Activated CD4-positive, alpha-beta T cell treated with anti-CD3 and anti-CD28 coated beads, Interleukin-2, amount 10 ng/mL, durations not matched to agents 24 days and 14 days (primary cell): ENCODE measurements at regions of chr4 and their contacts with region 1.

Region 1: DNA sequence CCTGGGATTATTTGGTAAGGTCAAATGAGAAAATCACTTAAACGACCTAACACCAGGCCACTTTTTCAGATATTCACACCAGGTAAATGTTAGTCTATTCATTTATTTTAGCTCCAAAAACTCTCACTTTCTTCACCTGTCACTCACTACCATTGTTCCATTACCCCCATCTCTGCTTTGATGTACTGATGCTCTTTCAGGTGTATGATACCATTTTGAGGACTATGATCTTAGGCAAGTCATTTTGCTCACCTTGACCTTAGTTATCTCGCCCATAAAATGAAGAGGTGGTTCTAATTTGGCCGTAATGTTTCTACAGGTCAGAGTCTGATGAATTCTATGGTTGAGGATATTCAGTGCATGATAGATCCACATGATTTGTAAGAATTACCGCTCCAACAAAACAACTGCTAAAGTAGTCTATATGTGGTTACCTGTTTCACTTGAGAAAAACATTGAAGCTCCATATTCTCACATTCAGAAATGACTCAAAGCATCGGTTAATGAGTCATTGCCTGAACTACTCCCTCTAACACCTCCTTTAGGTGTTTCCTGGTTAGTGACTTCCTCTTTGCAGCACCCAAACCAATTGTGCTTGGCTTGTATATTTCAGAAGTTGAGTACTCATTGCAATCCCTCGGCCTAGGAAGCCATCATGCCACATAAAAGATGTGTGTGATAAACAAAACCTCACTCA is 4.5 kb downstream of the DTHD1 start:
- DNase-seq: peak; percentile 92
- H3K4me3 Mint-ChIP-seq: peak overlapping the region; percentile 75
- H3K27ac Mint-ChIP-seq: peak overlapping the region; percentile 96
- H3K4me1 Mint-ChIP-seq: peaks cover 65% of the 10 kb centered on the region
- H3K27me3 Mint-ChIP-seq: peaks cover 3% of the 10 kb centered on the region

Region 2: GRCh38 chr4:36054750-36055467 is 231.0 kb before region 1 on chr4:
- intact Hi-C with region 1: no loop called
- DNase-seq: no peak
- H3K4me3 Mint-ChIP-seq: no peak overlapping the region
- H3K27ac Mint-ChIP-seq: no peak overlapping the region
- H3K4me1 Mint-ChIP-seq: no peaks in the 10 kb centered on the region
- H3K27me3 Mint-ChIP-seq: no peaks in the 10 kb centered on the region

Region 3: DNA sequence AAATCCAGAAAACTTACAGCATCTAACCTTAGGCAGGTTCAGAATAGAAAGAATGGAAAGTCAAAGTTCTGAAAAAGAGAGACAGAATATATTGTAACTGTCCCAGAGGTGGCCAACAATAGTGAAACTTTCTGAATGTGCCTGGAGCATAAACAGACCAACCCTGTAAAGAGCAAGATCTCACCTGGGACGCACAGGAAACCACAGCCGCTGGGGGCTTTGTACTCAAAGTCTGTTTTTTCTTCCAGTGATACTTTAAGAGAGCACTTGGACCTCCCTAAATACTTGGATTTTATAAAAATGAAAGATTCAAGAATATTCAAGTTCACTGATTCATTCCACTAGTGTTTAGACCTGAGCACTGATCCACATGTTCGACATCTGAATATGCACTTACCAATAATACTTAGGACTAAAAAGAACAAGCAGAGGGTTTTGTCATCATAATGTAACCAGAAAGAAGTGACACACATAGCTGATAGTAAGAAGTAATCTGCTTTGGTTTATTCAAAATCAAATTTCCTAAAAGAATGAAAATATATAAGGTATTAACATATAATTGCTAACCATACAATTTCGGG is 76.9 kb before region 1 on chr4:
- intact Hi-C with region 1: loop called (anchors 1 kb)
- DNase-seq: peak; percentile 72
- H3K4me3 Mint-ChIP-seq: peak overlapping the region; percentile 57
- H3K27ac Mint-ChIP-seq: peak overlapping the region; percentile 78
- H3K4me1 Mint-ChIP-seq: peaks cover 39% of the 10 kb centered on the region
- H3K27me3 Mint-ChIP-seq: no peaks in the 10 kb centered on the region

Region 4: GRCh38 chr4:36255577-36255976 is 30.4 kb before region 1 on chr4:
- intact Hi-C with region 1: loop called (anchors 1 kb)
- DNase-seq: peak; percentile 91
- H3K4me3 Mint-ChIP-seq: peak overlapping the region; percentile 70
- H3K27ac Mint-ChIP-seq: peak overlapping the region; percentile 91
- H3K4me1 Mint-ChIP-seq: peaks cover 28% of the 10 kb centered on the region
- H3K27me3 Mint-ChIP-seq: no peaks in the 10 kb centered on the region

Region 5: DNA sequence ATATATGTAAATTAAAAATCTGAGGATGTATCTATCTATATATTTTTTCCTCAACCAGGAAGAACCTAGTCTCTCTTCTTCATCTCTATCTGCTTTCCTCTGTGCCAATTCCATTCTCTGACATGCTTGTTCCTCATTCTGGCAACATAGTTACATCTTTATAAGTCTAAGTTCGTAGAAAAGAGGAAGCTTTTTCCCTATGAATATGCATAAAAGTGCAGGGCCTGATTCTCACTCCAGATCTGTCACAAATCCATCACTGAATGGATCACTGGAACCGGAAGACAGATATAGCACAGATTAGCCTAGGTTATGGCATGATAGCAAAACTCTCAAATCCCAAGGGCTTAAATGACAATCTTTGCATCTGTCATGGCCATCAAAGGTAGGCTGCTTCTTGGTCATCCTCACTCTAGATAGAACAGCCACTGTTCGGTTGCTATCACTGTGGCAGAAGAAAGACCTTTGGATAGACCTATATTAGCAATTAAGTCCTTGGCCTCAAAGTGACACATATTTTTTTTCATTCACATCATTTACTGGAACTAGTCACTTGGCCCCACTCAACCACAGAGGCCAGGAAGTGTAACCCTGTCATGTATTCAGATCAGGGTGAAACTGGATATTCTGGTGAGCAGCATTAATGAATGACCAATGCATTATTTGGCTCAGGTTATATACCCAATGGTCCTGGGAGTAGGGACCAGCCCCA is 17.6 kb after region 1 on chr4:
- intact Hi-C with region 1: loop called (anchors 2 kb)
- DNase-seq: no peak
- H3K4me3 Mint-ChIP-seq: no peak overlapping the region
- H3K27ac Mint-ChIP-seq: peak overlapping the region; percentile 29
- H3K4me1 Mint-ChIP-seq: peaks cover 14% of the 10 kb centered on the region
- H3K27me3 Mint-ChIP-seq: no peaks in the 10 kb centered on the region

Region 6: DNA sequence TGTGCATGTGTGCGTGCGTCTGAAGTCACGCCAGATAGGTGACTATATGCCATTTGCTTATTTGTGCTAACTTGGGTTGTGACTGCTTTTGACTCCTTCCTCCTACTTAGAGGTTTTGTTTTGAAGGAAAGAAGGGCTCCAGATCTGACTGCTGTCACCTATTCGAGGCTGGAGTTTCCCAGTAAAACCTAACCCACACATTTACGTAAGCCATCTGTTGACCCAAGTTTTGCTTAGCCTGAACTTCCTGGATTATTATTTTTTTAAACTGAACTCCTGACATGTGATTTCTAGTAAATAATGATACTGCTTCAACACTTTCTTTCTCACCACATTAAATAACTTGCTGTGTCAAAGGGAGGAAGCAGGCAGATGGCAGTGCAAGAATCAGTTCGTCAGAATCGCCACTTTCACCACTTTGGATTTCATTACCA is 37.0 kb after region 1 on chr4:
- intact Hi-C with region 1: loop called (anchors 1 kb)
- DNase-seq: peak; percentile 90
- H3K4me3 Mint-ChIP-seq: peak overlapping the region; percentile 21
- H3K27ac Mint-ChIP-seq: peak overlapping the region; percentile 93
- H3K4me1 Mint-ChIP-seq: peaks cover 71% of the 10 kb centered on the region
- H3K27me3 Mint-ChIP-seq: no peaks in the 10 kb centered on the region

Region 7: DNA sequence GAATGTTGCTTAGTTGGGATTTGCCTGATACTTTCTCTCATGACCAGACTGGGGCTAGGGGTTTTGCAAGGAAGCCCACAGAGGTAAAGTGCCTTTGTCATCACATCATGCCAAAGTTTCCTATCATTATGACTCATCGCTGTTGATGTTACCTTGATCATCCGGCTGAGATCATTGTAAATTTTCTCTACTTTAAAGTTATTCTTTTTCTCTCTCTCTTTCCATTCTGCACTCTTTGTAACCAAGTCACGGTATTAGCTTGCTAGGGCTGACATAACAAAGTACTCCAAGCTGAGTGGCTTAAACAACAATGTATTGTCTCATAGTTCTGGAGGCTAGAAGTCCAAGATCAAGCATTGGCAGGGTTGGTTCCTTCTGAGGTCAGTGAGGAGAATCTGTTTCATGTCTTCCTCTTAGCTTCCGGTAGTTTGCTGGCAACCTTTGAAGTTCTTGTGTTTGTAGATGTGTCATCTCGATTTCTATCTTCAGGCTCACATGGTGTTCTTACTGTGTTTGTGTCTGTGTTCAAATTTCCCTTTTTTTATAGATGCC is 108.5 kb after region 1 on chr4:
- intact Hi-C with region 1: loop called (anchors 1 kb)
- DNase-seq: peak; percentile 88
- H3K4me3 Mint-ChIP-seq: peak overlapping the region; percentile 70
- H3K27ac Mint-ChIP-seq: peak overlapping the region; percentile 97
- H3K4me1 Mint-ChIP-seq: peaks cover 23% of the 10 kb centered on the region
- H3K27me3 Mint-ChIP-seq: no peaks in the 10 kb centered on the region

Region 8: DNA sequence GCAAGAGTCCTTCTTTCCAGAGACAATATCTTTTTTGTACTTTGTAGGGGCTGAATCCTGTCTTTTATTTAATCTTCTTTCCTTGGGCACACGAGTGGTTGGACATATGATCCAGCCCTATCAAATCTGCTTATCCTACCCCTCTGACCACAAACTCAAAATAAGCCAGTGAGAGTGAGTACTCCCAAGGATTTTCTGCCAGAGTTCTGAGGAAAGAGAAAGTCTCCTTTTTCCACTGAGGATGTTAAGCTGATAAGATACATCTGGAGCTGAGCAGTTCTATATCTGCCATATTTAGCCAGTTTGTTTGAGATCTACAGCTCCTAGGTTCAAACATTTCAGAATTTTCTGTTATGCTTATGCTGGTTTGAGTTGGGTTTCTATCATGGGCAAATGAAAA is 823.8 kb after region 1 on chr4:
- intact Hi-C with region 1: no loop called
- DNase-seq: no peak
- H3K4me3 Mint-ChIP-seq: no peak overlapping the region
- H3K27ac Mint-ChIP-seq: no peak overlapping the region
- H3K4me1 Mint-ChIP-seq: no peaks in the 10 kb centered on the region
- H3K27me3 Mint-ChIP-seq: no peaks in the 10 kb centered on the region